Activated naive CD4-positive, alpha-beta T cell treated with anti-CD3 and anti-CD28 coated beads, Interleukin-2, amount 10 ng/mL, durations not matched to agents 7 days and 5 days (primary cell): ENCODE measurements at regions of chr9 and their contacts with region 1.

Region 1: DNA sequence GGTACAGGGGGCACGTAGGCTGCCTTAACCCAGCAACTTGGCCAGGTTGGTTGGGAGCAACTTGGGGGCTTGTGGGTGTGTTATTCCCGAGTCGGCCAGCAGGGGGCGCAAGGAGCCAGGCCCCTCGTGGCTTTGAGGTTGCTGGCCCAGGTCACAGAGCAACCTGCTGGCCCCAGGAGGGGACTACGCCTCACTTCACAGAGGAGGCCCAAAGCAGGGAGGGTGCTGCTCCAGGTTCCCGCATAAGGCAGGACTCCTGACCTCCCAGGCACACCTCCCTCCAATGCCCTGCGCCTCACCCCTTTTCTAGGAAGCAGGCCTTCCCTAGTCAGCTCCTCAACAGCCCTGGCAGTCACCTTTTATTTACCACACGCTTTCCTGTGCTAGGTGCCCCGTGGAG is 18.1 kb downstream of the KYAT1 start:
- DNase-seq: peak; percentile 91
- H3K4me3 Mint-ChIP-seq: no peak overlapping the region
- H3K27ac Mint-ChIP-seq: peak overlapping the region; percentile 70
- H3K4me1 Mint-ChIP-seq: peaks cover 22% of the 10 kb centered on the region
- H3K27me3 Mint-ChIP-seq: no peaks in the 10 kb centered on the region

Region 2: GRCh38 chr9:128635283-128636023 is 228.2 kb before region 1 on chr9:
- CTCF ChIA-PET with region 1: no interaction called
- DNase-seq: no peak
- H3K4me3 Mint-ChIP-seq: no peak overlapping the region
- H3K27ac Mint-ChIP-seq: no peak overlapping the region
- H3K4me1 Mint-ChIP-seq: no peaks in the 10 kb centered on the region
- H3K27me3 Mint-ChIP-seq: no peaks in the 10 kb centered on the region

Region 3: GRCh38 chr9:128712451-128713410 is 150.9 kb before region 1 on chr9:
- CTCF ChIA-PET with region 1: no interaction called
- DNase-seq: peak; percentile 18
- H3K4me3 Mint-ChIP-seq: no peak overlapping the region
- H3K27ac Mint-ChIP-seq: no peak overlapping the region
- H3K4me1 Mint-ChIP-seq: no peaks in the 10 kb centered on the region
- H3K27me3 Mint-ChIP-seq: no peaks in the 10 kb centered on the region

Region 4: GRCh38 chr9:128875790-128876160 is 12.1 kb after region 1 on chr9:
- CTCF ChIA-PET with region 1: interaction called, 23 read pairs
- DNase-seq: no peak
- H3K4me3 Mint-ChIP-seq: no peak overlapping the region
- H3K27ac Mint-ChIP-seq: no peak overlapping the region
- H3K4me1 Mint-ChIP-seq: peaks cover 29% of the 10 kb centered on the region
- H3K27me3 Mint-ChIP-seq: no peaks in the 10 kb centered on the region

Region 5: DNA sequence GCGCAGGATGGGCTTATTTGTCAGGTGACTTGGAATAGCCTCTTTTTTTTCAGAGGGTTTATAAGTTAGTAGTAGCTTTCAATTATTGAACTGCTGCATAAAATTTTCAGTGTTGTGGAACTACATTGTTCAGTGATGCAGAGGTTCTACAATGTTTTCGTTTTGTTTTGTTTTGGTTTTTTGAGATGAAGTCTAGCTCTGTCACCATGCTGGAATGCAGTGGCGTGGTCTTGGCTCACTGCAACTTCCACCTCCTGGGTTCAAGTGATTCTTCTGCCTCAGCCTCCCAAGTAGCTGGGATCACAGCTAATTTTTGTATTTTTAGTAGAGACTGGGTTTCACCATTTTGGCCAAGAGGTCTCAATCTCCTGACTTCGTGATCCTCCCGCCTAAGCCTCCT is 105.8 kb after region 1 on chr9:
- CTCF ChIA-PET with region 1: no interaction called
- DNase-seq: no peak
- H3K4me3 Mint-ChIP-seq: no peak overlapping the region
- H3K27ac Mint-ChIP-seq: no peak overlapping the region
- H3K4me1 Mint-ChIP-seq: no peaks in the 10 kb centered on the region
- H3K27me3 Mint-ChIP-seq: no peaks in the 10 kb centered on the region

Region 6: GRCh38 chr9:129460323-129461261 is 596.9 kb after region 1 on chr9:
- CTCF ChIA-PET with region 1: no interaction called
- DNase-seq: peak; percentile 92
- H3K4me3 Mint-ChIP-seq: peak overlapping the region; percentile 67
- H3K27ac Mint-ChIP-seq: peak overlapping the region; percentile 73
- H3K4me1 Mint-ChIP-seq: peaks cover 38% of the 10 kb centered on the region
- H3K27me3 Mint-ChIP-seq: peaks cover 81% of the 10 kb centered on the region